HEK293 (cell line): ENCODE measurements at regions of chr9 and their contacts with region 1.

Region 1: GRCh38 chr9:84919440-84919839 is 249.9 kb downstream of the NTRK2 start:
- H3K4me3 ChIP-seq: no peak overlapping the region
- H3K27ac ChIP-seq: no peak overlapping the region
- H3K4me1 ChIP-seq: no peaks in the 10 kb centered on the region
- CTCF ChIP-seq: no peak

Region 2: GRCh38 chr9:84932915-84933527 is 13.6 kb after region 1 on chr9:
- CTCF ChIA-PET with region 1: interaction called, 17 read pairs
- POLR2A ChIA-PET with region 1: no interaction called
- H3K4me3 ChIP-seq: no peak overlapping the region
- H3K27ac ChIP-seq: no peak overlapping the region
- H3K4me1 ChIP-seq: no peaks in the 10 kb centered on the region
- CTCF ChIP-seq: no peak; the same call in 1 of the 2 replicates

Region 3: GRCh38 chr9:84990102-84990815 is 70.8 kb after region 1 on chr9:
- CTCF ChIA-PET with region 1: no interaction called
- POLR2A ChIA-PET with region 1: no interaction called
- H3K4me3 ChIP-seq: no peak overlapping the region
- H3K27ac ChIP-seq: no peak overlapping the region
- H3K4me1 ChIP-seq: no peaks in the 10 kb centered on the region
- CTCF ChIP-seq: no peak

Region 4: DNA sequence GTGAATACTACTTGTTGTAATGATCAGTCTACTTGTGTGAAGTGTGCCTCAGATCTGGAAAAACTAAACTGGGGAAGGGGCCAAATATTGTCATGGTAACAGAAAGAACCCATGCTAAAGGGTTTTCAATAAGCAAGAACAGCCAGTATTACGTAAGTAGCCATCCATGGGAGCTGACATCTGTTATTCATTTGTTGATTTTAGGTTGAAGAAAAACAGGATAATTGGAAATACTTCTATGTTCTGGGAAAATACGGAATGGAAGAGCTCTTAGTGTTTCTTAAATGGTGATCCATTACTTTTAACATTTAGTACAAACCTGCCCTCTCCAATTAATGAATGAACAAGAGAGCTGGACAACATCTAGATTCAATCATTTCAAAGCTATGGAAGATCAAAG is 235.9 kb after region 1 on chr9:
- CTCF ChIA-PET with region 1: no interaction called
- POLR2A ChIA-PET with region 1: no interaction called
- H3K4me3 ChIP-seq: no peak overlapping the region
- H3K27ac ChIP-seq: no peak overlapping the region
- H3K4me1 ChIP-seq: peaks cover 15% of the 10 kb centered on the region
- CTCF ChIP-seq: no peak